Activated naive CD8-positive, alpha-beta T cell treated with anti-CD3 and anti-CD28 coated beads, Interleukin-2, amount 10 ng/mL, durations not matched to agents 7 days and 5 days (primary cell): ENCODE measurements at regions of chr2 and their contacts with region 1.

Region 1: DNA sequence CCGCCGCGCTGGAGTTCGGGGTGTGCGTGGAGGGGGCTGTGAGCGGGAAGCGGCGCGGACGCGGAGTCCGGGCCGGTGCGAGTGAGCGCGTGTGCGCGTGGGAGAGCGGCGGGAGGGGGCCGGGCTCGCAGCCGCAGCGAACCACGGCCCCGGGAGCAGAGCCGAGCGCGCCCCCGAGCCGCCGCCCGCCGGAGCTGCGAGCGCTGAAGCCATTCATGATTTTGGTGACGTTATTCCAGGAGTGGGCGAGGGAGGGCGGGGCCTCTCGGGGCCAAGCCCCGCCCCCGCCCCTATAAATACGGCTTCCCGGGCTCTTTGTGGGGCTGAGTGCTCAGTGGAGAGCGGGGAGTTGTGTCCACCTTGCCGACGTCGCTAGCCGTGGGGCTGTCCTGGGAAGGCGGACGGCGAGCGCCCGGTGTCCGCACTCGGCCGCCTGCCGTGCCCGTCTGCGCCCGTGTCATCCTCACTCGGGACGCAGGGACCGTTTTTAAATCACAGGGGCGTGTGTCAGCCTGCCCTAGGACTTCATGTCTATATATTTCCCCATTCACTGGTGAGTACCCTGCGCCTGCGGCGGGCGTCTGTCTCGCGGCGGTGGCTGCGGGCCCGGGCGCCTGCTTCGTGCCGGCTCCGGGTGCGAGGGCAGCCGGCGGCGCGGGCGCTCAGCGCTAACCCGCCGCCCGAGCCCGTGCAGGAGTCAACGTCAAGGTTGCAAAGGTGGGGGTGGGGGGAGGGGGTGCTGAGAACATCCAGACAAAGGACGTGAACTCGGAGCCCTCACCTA is at the start of gene LBH:
- DNase-seq: peak; percentile 86
- ATAC-seq: peak; percentile 35
- H3K4me3 Mint-ChIP-seq: peak within 1 kb of the TSS; percentile 90
- H3K27ac Mint-ChIP-seq: peak within 1 kb of the TSS; percentile 92
- H3K4me1 Mint-ChIP-seq: peaks cover 42% of the 10 kb centered on the region
- H3K27me3 Mint-ChIP-seq: peaks cover 2% of the 10 kb centered on the region
- total RNA-seq, gene LBH: 169 to 186 TPM

Region 2: DNA sequence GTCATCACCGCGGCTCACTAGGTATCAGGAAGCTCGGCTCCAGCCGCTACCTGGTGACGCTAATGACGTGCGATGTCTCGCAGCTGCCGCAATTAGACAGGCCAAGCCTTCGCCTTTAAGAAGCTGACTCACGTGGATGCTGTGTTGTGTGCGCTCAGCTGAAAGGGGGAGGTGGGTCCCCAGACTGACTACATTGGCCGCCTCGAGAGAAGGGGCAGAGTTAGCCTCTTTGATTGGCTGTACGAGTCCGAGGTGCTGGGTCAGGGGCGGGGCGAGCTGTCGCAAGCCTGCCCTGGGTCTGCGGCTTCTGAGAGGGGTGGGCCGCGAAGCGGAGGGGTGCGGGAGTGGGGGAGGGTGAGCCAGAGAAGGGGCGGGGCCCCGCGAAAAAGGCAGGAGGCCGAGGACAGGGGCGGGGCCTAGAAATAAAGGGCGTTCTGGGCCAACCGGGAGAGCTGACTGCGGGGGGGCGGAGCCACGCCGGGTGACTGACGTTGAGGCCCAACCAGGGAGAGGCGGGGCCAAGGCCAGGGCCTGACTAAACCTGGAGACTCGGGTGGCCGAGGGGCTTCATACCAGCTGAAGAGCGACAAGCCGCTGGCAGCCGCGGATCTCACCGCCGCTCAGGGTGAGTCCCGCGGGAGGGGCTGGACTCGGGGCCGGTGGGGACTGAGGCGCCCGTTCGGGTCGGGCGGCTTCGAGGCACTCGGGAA is 84.8 kb before region 1 on chr2 and contains the start of gene YPEL5:
- POLR2A ChIA-PET with region 1: interaction called, 26 read pairs
- DNase-seq: peak; percentile 98
- ATAC-seq: peak; percentile 93
- H3K4me3 Mint-ChIP-seq: peak within 1 kb of the TSS; percentile 89
- H3K27ac Mint-ChIP-seq: peak within 1 kb of the TSS; percentile 97
- H3K4me1 Mint-ChIP-seq: peaks cover 26% of the 10 kb centered on the region
- H3K27me3 Mint-ChIP-seq: no peaks in the 10 kb centered on the region
- total RNA-seq, gene YPEL5: 50.0 to 55.1 TPM

Region 3: GRCh38 chr2:30197564-30198192 is 33.7 kb before region 1 on chr2:
- POLR2A ChIA-PET with region 1: no interaction called
- DNase-seq: no peak
- ATAC-seq: no peak
- H3K4me3 Mint-ChIP-seq: no peak overlapping the region
- H3K27ac Mint-ChIP-seq: no peak overlapping the region
- H3K4me1 Mint-ChIP-seq: peaks cover 2% of the 10 kb centered on the region
- H3K27me3 Mint-ChIP-seq: peaks cover under 1% of the 10 kb centered on the region

Region 4: GRCh38 chr2:30252723-30253701 is 21.6 kb after region 1 on chr2:
- POLR2A ChIA-PET with region 1: interaction called, 73 read pairs
- DNase-seq: no peak
- ATAC-seq: peak; percentile 67
- H3K4me3 Mint-ChIP-seq: peak overlapping the region; percentile 51
- H3K27ac Mint-ChIP-seq: peak overlapping the region; percentile 70
- H3K4me1 Mint-ChIP-seq: peaks cover 80% of the 10 kb centered on the region
- H3K27me3 Mint-ChIP-seq: no peaks in the 10 kb centered on the region

Region 5: GRCh38 chr2:30336978-30337841 is 105.8 kb after region 1 on chr2:
- POLR2A ChIA-PET with region 1: interaction called, 123 read pairs
- DNase-seq: peak; percentile 74
- ATAC-seq: peak; percentile 90
- H3K4me3 Mint-ChIP-seq: peak overlapping the region; percentile 83
- H3K27ac Mint-ChIP-seq: peak overlapping the region; percentile 97
- H3K4me1 Mint-ChIP-seq: peaks cover 61% of the 10 kb centered on the region
- H3K27me3 Mint-ChIP-seq: no peaks in the 10 kb centered on the region

Region 6: DNA sequence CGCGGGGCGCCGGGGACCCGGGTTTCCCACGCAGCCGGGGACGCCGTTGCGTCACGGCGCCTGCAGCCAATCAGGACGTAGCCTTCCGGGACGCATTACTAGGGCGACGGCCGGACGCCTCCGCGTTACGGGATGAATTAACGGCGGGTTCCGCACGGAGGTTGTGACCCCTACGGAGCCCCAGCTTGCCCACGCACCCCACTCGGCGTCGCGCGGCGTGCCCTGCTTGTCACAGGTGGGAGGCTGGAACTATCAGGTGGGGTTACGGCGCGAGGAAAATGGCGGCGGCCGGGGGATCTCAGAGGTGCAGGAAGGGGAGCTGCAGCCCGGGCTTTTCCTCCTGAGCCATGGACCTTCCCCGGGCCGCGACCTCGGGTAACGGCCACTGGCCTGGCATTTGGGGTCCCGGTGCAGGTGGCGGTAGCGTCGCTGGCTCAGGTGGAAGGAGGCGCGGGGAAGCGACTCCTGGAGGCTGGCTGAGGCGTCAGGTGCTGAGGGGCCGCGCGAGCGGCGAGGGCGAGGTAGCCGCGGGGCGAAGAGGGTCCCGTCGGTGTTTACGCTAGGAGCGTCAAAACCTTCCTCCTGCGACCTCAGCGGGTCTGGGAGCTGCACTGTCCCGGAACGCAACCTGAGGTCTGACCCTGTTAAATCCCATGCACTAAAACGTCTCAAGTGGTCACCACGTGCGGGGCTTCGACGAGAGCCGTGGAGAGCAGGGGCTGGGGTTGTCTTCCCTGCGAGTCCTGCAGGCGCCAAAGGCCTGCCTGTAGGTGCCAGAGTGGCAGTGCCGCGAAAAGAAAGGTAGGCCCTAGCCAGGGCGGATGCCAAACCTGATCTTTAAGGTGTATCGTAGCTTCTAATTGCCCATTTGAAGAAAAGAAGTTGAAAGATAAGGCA is 216.0 kb after region 1 on chr2 and contains the start of gene LCLAT1:
- POLR2A ChIA-PET with region 1: interaction called, 19 read pairs
- DNase-seq: peak; percentile 90
- ATAC-seq: peak; percentile 90
- H3K4me3 Mint-ChIP-seq: peak within 1 kb of the TSS; percentile 92
- H3K27ac Mint-ChIP-seq: peak within 1 kb of the TSS; percentile 92
- H3K4me1 Mint-ChIP-seq: peaks cover 18% of the 10 kb centered on the region
- H3K27me3 Mint-ChIP-seq: no peaks in the 10 kb centered on the region
- total RNA-seq, gene LCLAT1: 19.8 to 21.2 TPM